H1 (cell line): ENCODE measurements at regions of chr1 and their contacts with region 1.

Region 1: DNA sequence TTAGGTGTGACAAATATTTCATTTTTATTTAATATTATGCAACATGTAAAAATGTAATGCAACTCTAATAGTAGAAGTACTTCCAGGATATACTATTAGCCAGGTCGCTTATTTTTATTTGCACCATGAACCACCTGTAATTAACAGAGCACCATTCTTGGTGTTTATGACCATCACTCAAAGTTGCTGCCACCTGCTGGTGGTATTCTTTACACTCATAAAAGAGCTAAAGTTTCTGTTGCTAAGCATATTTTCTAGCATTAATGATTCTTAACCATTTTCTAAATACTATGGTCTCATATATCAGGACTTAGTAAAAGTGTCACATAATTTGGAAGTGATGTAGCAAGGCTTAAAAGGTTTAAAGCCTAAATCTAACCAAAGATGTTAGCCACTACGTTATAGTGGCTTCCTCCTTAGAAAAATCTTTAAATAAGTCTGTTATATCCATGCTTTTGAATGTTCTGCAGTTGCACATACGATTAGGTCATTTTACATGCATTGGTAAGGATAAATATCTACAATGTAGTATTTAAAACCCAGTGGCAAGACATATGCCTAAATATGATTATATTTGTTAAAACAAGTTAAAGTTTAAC is 244.5 kb downstream of the NEGR1 start:
- DNase-seq: no peak
- H3K4me3 ChIP-seq: no peak overlapping the region
- H3K27ac ChIP-seq: no peak overlapping the region
- H3K4me1 ChIP-seq: peaks cover 0 to 2% (median 0%) of the 10 kb centered on the region in 4 experiments; a peak in 1 of 7 replicates
- H3K27me3 ChIP-seq: no peaks in the 10 kb centered on the region
- CTCF ChIP-seq: peak in 2 of 3 experiments; percentile 45 to 46; a peak in 3 of 4 replicates
- EP300 ChIP-seq: no peak
- POLR2A ChIP-seq: no peak
- RAD21 ChIP-seq: peak; percentile 64 to 71

Region 2: GRCh38 chr1:72023063-72023930 is 14.5 kb before region 1 on chr1:
- CTCF ChIA-PET with region 1: interaction called, 10 read pairs
- POLR2A ChIA-PET with region 1: interaction called, 5 read pairs
- DNase-seq: no peak
- H3K4me3 ChIP-seq: peak overlapping the region in 1 of 4 experiments; percentile 40; a peak in 2 of 8 replicates
- H3K27ac ChIP-seq: no peak overlapping the region
- H3K4me1 ChIP-seq: peaks cover 0 to 8% (median 2%) of the 10 kb centered on the region in 4 experiments; a peak in 3 of 7 replicates
- H3K27me3 ChIP-seq: no peaks in the 10 kb centered on the region
- CTCF ChIP-seq: no peak
- EP300 ChIP-seq: no peak
- POLR2A ChIP-seq: no peak
- RAD21 ChIP-seq: no peak